Caco-2 (cell line): ENCODE measurements at regions of chr4 and their contacts with region 1.

Region 1: DNA sequence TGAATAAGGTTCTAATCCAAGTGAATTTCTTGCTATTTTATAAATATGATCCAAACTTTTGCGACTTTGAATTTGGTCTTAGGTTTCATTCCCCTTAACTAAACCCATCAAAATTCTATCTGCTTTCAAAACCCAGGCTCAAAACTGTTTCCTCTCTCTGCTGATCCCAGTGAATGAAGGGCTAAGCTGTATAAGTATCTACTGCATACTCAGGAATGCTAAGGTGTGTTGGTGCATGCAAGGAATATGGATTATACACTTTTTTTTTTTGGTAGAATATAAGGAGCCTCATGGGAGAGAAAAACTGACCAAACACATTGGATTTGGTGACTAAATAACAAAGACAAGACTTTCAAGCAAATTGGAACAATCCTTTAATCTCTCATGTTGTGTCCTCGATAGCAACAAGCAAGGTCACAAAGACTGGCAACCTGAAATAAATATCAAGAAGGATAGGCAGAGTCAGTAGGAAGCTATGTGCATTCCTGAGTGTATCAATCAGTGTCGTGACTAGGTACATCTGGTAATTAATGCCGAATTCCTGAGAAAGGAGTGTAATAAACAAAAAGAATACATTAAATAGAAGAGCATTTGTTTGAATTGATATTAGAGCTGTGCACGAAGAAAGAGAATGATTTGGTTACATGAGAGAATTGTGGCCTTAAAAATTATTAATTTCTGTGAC is 74.3 kb upstream of the KCTD8 start:
- DNase-seq: no peak
- H3K4me3 ChIP-seq: no peak overlapping the region
- H3K4me3 Mint-ChIP-seq: no peak overlapping the region
- H3K27ac Mint-ChIP-seq: no peak overlapping the region
- H3K4me1 ChIP-seq: no peaks in the 10 kb centered on the region
- H3K4me1 Mint-ChIP-seq: no peaks in the 10 kb centered on the region
- H3K27me3 ChIP-seq: no peaks in the 10 kb centered on the region
- H3K27me3 Mint-ChIP-seq: peaks cover 8% of the 10 kb centered on the region
- CTCF ChIP-seq: no peak

Region 2: DNA sequence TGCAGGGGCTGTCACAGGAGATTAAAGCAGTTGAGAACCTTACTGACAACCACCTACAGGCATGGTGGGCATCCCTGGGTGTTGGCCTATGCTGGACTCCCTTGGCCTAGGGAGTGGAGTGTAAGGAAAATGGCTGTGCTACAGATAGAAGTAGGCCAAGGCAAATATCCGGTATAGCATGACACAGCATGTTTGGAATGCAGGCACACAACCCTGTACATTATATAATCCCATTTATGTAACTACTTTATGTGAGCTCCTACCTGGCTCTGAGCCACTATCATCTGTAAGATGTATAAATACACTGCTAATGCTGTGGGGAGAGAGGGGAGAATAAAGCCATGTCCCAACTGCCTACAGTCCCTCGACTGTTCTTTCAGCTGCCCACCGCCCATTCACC is 35.6 kb before region 1 on chr4:
- CTCF ChIA-PET with region 1: no interaction called
- POLR2A ChIA-PET with region 1: no interaction called
- intact Hi-C with region 1: loop called (anchors 1 kb)
- DNase-seq: no peak
- H3K4me3 ChIP-seq: no peak overlapping the region
- H3K4me3 Mint-ChIP-seq: no peak overlapping the region
- H3K27ac Mint-ChIP-seq: no peak overlapping the region
- H3K4me1 ChIP-seq: no peaks in the 10 kb centered on the region
- H3K4me1 Mint-ChIP-seq: no peaks in the 10 kb centered on the region
- H3K27me3 ChIP-seq: no peaks in the 10 kb centered on the region
- H3K27me3 Mint-ChIP-seq: no peaks in the 10 kb centered on the region
- CTCF ChIP-seq: no peak